Right ventricle myocardium superior (tissue), 1 donor: ENCODE measurements at regions of chr2 and their contacts with region 1.

Region 1: DNA sequence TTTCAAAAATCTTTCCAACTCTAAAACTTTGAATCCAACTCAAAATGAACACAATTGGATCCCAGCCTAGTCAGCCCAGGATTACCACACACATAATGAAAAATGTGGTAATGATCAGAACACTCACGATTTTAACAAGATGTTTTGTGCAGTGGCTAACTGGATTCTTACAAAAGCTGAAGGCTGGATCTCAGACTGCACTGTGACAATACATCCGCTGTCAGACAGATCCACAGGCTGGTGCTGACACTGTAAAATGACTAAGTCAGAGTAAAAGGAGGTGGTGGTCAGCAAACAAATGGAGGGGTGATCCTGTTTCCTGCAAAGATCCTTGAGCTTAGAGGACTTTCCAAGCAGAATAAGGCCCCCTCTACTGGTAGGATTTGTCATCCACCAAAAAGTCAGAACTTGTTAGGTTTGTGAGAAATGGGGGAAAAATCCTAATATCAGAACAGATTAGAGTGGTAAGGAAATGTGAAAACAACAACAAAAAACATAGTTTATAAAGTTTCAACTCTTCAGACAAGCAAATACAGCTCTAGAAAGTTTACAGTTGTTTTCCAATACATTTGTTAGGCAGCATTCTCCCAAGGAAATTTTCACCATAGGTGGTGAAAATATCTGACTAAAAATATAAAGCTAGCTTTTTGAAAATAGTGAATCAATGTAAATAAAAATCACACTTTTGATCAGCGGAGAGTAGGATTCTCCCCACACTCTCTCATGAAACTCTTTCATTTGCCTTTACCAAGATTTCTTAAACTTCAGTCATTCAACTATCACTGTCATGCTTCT is 211.9 kb downstream of the AGPS start:
- DNase-seq: no peak
- ATAC-seq: peak; percentile 75

Region 2: GRCh38 chr2:177353187-177353478 is 251.3 kb before region 1 on chr2:
- intact Hi-C with region 1: no loop called
- DNase-seq: no peak
- ATAC-seq: peak; percentile 65

Region 3: GRCh38 chr2:177519534-177520355 is 84.7 kb before region 1 on chr2:
- intact Hi-C with region 1: loop called (anchors 10 kb)
- DNase-seq: no peak
- ATAC-seq: no peak